CD8-positive, alpha-beta T cell (primary cell): ENCODE measurements at regions of chr7 and their contacts with region 1.

Region 1: DNA sequence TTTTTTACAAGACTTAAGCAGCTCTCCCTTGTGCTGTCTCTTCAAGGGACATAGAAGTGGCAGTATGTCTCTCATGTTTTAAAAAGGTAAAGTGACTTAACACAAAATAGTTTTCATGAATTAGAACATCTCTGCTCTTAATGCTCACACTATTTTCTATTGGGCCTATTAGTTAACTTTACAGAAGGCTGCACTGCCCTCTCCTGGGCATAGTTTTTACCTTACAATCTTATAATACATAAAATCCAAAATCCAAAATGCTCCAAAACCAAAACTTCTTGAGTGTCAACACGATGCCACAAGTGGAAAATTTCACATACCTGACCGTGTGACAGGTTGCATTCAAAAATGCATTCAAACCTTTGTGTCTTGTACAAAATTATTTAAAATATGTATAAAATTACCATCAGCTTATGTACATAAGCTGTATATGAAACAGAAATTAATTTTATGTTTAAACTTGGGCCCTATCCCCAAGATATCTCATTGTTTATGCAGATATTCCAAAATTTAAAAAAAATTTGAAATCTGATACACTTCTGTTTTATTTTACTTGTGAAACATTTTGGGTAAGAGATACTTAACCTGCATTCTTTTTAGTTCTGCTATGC is 25.8 kb downstream of the TES start:
- DNase-seq: peak; percentile 28 to 79 (median 66)
- ATAC-seq: peak; percentile 82
- H3K4me3 ChIP-seq: no peak overlapping the region
- H3K4me3 Mint-ChIP-seq: no peak overlapping the region
- H3K27ac ChIP-seq: peak overlapping the region in 1 of 2 experiments; percentile 9
- H3K27ac Mint-ChIP-seq: no peak overlapping the region
- H3K4me1 ChIP-seq: peaks cover 43% of the 10 kb centered on the region
- H3K4me1 Mint-ChIP-seq: peaks cover 67% of the 10 kb centered on the region
- H3K27me3 ChIP-seq: no peaks in the 10 kb centered on the region
- H3K27me3 Mint-ChIP-seq: no peaks in the 10 kb centered on the region
- CTCF ChIP-seq: peak; percentile 87

Region 2: DNA sequence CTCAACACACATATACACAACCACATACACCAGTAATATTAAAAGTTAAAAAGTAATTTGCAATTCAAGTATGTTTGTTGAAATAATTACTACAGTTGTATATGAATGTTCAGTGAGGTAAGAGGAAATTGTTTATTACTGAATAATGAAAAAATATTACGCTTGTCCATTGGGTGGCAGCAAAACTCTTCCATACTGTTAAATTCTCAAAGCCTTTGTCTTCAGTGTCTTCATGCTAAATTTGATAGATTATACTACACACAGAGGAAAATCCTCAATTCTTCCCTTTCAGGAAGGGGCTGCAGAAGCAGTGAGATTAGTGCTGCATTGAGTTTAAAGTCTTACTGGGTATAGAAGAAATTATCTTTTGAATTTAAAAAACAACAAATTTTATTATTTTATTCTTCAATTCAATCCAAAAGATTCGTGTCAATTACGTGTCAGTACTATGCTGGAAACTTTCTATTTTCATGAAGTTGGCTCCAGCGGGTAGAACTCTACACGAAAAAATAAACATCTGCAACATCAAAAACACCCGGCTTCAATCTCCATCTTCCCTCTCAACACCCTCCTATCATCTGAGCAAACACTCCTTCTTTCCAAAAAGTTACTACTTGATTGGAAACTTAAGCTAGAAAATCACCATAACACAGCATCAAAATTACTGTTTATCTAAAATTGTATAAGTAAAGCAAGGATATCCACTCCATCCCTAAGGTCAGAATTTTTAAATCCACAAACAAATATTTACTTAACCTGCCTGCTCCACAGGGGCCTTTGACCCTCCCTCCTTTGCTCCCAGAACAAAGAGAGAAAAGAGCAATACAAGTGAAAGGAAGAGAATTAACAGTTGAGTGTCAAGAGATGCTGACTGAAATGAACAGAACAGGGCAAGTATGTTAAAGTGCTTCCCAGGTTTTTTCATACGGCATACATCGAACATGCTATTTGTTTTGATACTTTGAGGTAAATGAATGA is 62.8 kb before region 1 on chr7:
- CTCF ChIA-PET with region 1: interaction called, 282 read pairs
- POLR2A ChIA-PET with region 1: no interaction called
- intact Hi-C with region 1: no loop called
- DNase-seq: peak in 4 of 9 experiments; percentile 16 to 73 (median 58)
- ATAC-seq: peak; percentile 63
- H3K4me3 ChIP-seq: no peak overlapping the region
- H3K4me3 Mint-ChIP-seq: no peak overlapping the region
- H3K27ac ChIP-seq: no peak overlapping the region
- H3K27ac Mint-ChIP-seq: no peak overlapping the region
- H3K4me1 ChIP-seq: no peaks in the 10 kb centered on the region
- H3K4me1 Mint-ChIP-seq: no peaks in the 10 kb centered on the region
- H3K27me3 ChIP-seq: no peaks in the 10 kb centered on the region
- H3K27me3 Mint-ChIP-seq: peaks cover 11% of the 10 kb centered on the region
- CTCF ChIP-seq: peak; percentile 77

Region 3: GRCh38 chr7:116195451-116195850 is 40.7 kb before region 1 on chr7:
- CTCF ChIA-PET with region 1: interaction called, 11 read pairs
- POLR2A ChIA-PET with region 1: no interaction called
- intact Hi-C with region 1: no loop called
- DNase-seq: no peak
- ATAC-seq: no peak
- H3K4me3 ChIP-seq: no peak overlapping the region
- H3K4me3 Mint-ChIP-seq: no peak overlapping the region
- H3K27ac ChIP-seq: no peak overlapping the region
- H3K27ac Mint-ChIP-seq: no peak overlapping the region
- H3K4me1 ChIP-seq: no peaks in the 10 kb centered on the region
- H3K4me1 Mint-ChIP-seq: no peaks in the 10 kb centered on the region
- H3K27me3 ChIP-seq: no peaks in the 10 kb centered on the region
- H3K27me3 Mint-ChIP-seq: peaks cover 2% of the 10 kb centered on the region
- CTCF ChIP-seq: no peak

Region 4: GRCh38 chr7:116218051-116218645 is 18.0 kb before region 1 on chr7:
- CTCF ChIA-PET with region 1: interaction called, 63 read pairs
- POLR2A ChIA-PET with region 1: interaction called, 3 read pairs
- intact Hi-C with region 1: no loop called
- DNase-seq: no peak
- ATAC-seq: no peak
- H3K4me3 ChIP-seq: no peak overlapping the region
- H3K4me3 Mint-ChIP-seq: peak overlapping the region; percentile 16
- H3K27ac ChIP-seq: peak overlapping the region in 1 of 2 experiments; percentile 24
- H3K27ac Mint-ChIP-seq: no peak overlapping the region
- H3K4me1 ChIP-seq: peaks cover 92% of the 10 kb centered on the region
- H3K4me1 Mint-ChIP-seq: peaks cover 90% of the 10 kb centered on the region
- H3K27me3 ChIP-seq: no peaks in the 10 kb centered on the region
- H3K27me3 Mint-ChIP-seq: no peaks in the 10 kb centered on the region
- CTCF ChIP-seq: no peak

Region 5: GRCh38 chr7:116258734-116259133 is 22.6 kb after region 1 on chr7:
- CTCF ChIA-PET with region 1: interaction called, 12 read pairs
- POLR2A ChIA-PET with region 1: interaction called, 3 read pairs
- intact Hi-C with region 1: loop called in 1 of 2 experiments (anchors 2 kb)
- DNase-seq: peak in 4 of 9 experiments; percentile 24 to 69 (median 46)
- ATAC-seq: peak; percentile 61
- H3K4me3 ChIP-seq: no peak overlapping the region
- H3K4me3 Mint-ChIP-seq: no peak overlapping the region
- H3K27ac ChIP-seq: peak overlapping the region in 1 of 2 experiments; percentile 1
- H3K27ac Mint-ChIP-seq: no peak overlapping the region
- H3K4me1 ChIP-seq: no peaks in the 10 kb centered on the region
- H3K4me1 Mint-ChIP-seq: peaks cover 10% of the 10 kb centered on the region
- H3K27me3 ChIP-seq: no peaks in the 10 kb centered on the region
- H3K27me3 Mint-ChIP-seq: no peaks in the 10 kb centered on the region
- CTCF ChIP-seq: peak; percentile 89